ENCODE measurements at regions of chr21 and their contacts with region 1.

Region 1: DNA sequence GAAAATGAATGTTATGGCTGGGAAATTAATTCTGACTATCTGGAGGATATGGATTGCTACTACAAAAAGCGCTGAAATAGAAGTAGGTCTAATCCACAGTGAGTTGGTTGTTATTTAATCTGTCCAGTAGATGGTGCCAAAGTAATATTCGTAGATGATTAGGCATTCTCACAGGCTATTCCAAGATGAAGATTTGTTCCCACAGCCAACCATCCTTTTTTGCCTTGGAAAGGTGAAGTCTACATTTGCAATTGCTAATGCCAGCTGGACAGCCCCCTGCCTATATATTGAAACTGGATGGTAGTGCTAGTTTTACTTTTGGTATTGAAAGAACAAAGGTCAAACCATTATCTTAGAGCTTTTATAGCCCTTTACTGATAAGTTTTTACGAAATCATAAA is 43.8 kb downstream of the RBM11 start:
- DNase-seq: no peak
- ATAC-seq: peak; percentile 56 to 75
- H3K4me3 ChIP-seq: no peak overlapping the region
- H3K27ac ChIP-seq: no peak overlapping the region
- H3K4me1 ChIP-seq: no peaks in the 10 kb centered on the region
- H3K27me3 ChIP-seq: peaks cover 0 to 2% (median 0%) of the 10 kb centered on the region in 3 donors
- CTCF ChIP-seq: peak in 4 of 5 experiments; percentile 36 to 65 (median 46)
- POLR2A ChIP-seq: no peak

Region 2: GRCh38 chr21:14206222-14206621 is 53.5 kb before region 1 on chr21:
- in situ Hi-C with region 1: no loop called
- intact Hi-C with region 1: no loop called
- DNase-seq: no peak
- ATAC-seq: no peak
- H3K4me3 ChIP-seq: no peak overlapping the region
- H3K27ac ChIP-seq: no peak overlapping the region
- H3K4me1 ChIP-seq: no peaks in the 10 kb centered on the region
- H3K27me3 ChIP-seq: no peaks in the 10 kb centered on the region
- CTCF ChIP-seq: no peak
- POLR2A ChIP-seq: no peak

Region 3: GRCh38 chr21:14300074-14300473 is 40.3 kb after region 1 on chr21:
- in situ Hi-C with region 1: no loop called
- intact Hi-C with region 1: no loop called
- DNase-seq: no peak
- ATAC-seq: no peak
- H3K4me3 ChIP-seq: no peak overlapping the region
- H3K27ac ChIP-seq: no peak overlapping the region
- H3K4me1 ChIP-seq: no peaks in the 10 kb centered on the region
- H3K27me3 ChIP-seq: no peaks in the 10 kb centered on the region
- CTCF ChIP-seq: no peak
- POLR2A ChIP-seq: no peak

Region 4: GRCh38 chr21:14864211-14865021 is 604.7 kb after region 1 on chr21:
- in situ Hi-C with region 1: no loop called
- intact Hi-C with region 1: loop called (anchors 10 kb)
- DNase-seq: peak; percentile 59 to 76
- ATAC-seq: peak; percentile 97 to 98
- H3K4me3 ChIP-seq: no peak overlapping the region
- H3K27ac ChIP-seq: peak overlapping the region in 2 of 4 donors; percentile 8 to 34
- H3K4me1 ChIP-seq: peaks cover 13% of the 10 kb centered on the region in 2 donors
- H3K27me3 ChIP-seq: no peaks in the 10 kb centered on the region
- CTCF ChIP-seq: peak; percentile 41 to 74 (median 56)
- POLR2A ChIP-seq: no peak

Region 5: GRCh38 chr21:14952916-14953315 is 693.2 kb after region 1 on chr21:
- in situ Hi-C with region 1: no loop called
- intact Hi-C with region 1: no loop called
- DNase-seq: no peak
- ATAC-seq: no peak
- H3K4me3 ChIP-seq: no peak overlapping the region
- H3K27ac ChIP-seq: no peak overlapping the region
- H3K4me1 ChIP-seq: peaks cover 0 to 4% of the 10 kb centered on the region in 2 donors
- H3K27me3 ChIP-seq: no peaks in the 10 kb centered on the region
- CTCF ChIP-seq: no peak
- POLR2A ChIP-seq: no peak

Region 6: DNA sequence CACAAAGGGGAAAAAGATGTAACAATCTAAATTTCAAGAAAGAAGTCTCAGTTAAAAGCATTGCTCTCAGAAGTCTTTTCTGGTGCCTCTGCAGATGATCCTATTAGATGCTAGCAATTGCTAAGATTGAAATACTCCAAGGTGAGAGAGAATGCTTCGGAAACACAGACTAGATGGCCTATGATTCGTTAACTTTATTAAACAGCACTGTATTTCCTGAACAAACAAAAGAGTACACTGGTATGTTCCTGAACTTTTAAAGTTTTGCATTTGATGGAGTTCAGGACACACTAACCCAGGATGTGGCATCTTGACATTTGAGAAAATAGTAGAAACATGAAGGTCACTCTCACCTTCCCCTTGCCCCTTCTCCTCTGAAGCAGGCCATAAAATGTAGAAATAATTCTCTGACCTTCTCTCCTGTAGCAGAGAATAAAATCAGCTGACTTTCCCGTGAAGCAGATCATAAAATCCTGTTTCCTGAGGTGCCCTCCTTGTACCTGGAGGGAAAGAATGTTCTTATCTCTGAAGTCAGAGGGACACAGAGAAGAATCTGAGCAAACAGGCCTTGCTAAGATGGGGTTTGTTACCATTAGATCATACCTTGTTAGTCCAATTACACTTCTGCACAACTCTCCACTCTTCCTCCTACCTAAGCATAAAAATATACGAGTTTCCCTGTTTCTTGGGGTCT is 1327.2 kb after region 1 on chr21:
- in situ Hi-C with region 1: loop called (anchors 10 kb)
- intact Hi-C with region 1: no loop called
- DNase-seq: no peak
- ATAC-seq: no peak
- H3K4me3 ChIP-seq: no peak overlapping the region
- H3K27ac ChIP-seq: no peak overlapping the region
- H3K4me1 ChIP-seq: no peaks in the 10 kb centered on the region
- H3K27me3 ChIP-seq: no peaks in the 10 kb centered on the region
- CTCF ChIP-seq: no peak
- POLR2A ChIP-seq: no peak